Heart right ventricle (tissue), 16 donors: ENCODE measurements at regions of chr12 and their contacts with region 1.

Region 1: GRCh38 chr12:111330800-111331752 is 37.8 kb downstream of the PHETA1 start:
- DNase-seq: no peak
- ATAC-seq: peak in 4 of 8 donors; percentile 17 to 50 (median 36)
- H3K4me3 ChIP-seq: no peak overlapping the region
- H3K27ac ChIP-seq: no peak overlapping the region
- H3K4me1 ChIP-seq: no peaks in the 10 kb centered on the region
- H3K27me3 ChIP-seq: peaks cover 0 to 11% (median 0%) of the 10 kb centered on the region in 7 donors
- CTCF ChIP-seq: peak; percentile 20 to 59 (median 49)

Region 2: GRCh38 chr12:111409780-111410430 is 78.8 kb after region 1 on chr12:
- intact Hi-C with region 1: no loop called
- DNase-seq: peak; percentile 83 to 86
- ATAC-seq: peak; percentile 4 to 44 (median 20)
- H3K4me3 ChIP-seq: peak overlapping the region in 7 of 10 donors; percentile 83 to 97 (median 90)
- H3K27ac ChIP-seq: peak overlapping the region; percentile 83 to 100 (median 98)
- H3K4me1 ChIP-seq: peaks cover 62 to 90% (median 86%) of the 10 kb centered on the region in 9 donors
- H3K27me3 ChIP-seq: no peaks in the 10 kb centered on the region
- CTCF ChIP-seq: peak in 2 of 9 donors; percentile 6 to 9

Region 3: GRCh38 chr12:111444925-111445725 is 114.0 kb after region 1 on chr12:
- intact Hi-C with region 1: loop called in 2 of 10 experiments (anchors 1 to 5 kb)
- DNase-seq: peak; percentile 65 to 80
- ATAC-seq: peak; percentile 60 to 81 (median 68)
- H3K4me3 ChIP-seq: peak overlapping the region in 2 of 10 donors; percentile 2 to 7
- H3K27ac ChIP-seq: peak overlapping the region; percentile 28 to 93 (median 76)
- H3K4me1 ChIP-seq: peaks cover 32 to 100% (median 99%) of the 10 kb centered on the region in 9 donors
- H3K27me3 ChIP-seq: no peaks in the 10 kb centered on the region
- CTCF ChIP-seq: peak in 2 of 9 donors; percentile 25 to 27

Region 4: GRCh38 chr12:111741235-111741812 is 410.2 kb after region 1 on chr12:
- intact Hi-C with region 1: no loop called
- DNase-seq: no peak
- ATAC-seq: peak in 7 of 8 donors; percentile 39 to 82 (median 70)
- H3K4me3 ChIP-seq: no peak overlapping the region
- H3K27ac ChIP-seq: peak overlapping the region in 5 of 10 donors; percentile 21 to 58 (median 38)
- H3K4me1 ChIP-seq: peaks cover 0 to 15% (median 12%) of the 10 kb centered on the region in 9 donors
- H3K27me3 ChIP-seq: no peaks in the 10 kb centered on the region
- CTCF ChIP-seq: no peak